ENCODE measurements at regions of chr12 and their contacts with region 1.

Region 1: DNA sequence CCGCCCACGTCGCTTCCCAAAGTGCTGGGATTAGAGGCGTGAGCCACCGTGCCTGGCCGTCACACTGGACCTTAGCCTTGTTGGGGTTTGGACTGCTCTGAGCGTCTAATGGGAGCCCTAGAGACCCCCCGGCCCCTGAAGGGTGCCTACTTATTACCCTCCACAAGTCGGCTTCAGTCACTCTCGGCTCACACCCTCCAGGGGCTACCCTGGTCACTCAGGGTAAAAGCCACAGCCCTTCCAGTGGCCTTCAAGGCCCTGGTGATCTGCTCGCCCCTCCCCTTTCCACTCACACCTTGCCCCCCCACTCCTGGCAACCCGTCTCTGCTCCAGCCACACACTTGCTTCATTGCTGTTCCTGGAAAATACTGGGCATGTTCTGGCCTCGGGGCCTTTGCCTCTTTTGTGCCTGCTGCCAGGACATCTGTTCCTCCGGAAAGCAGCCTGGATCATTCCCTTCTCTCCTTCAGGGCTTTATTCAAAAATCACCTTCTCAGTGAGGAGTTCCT is 3.6 kb upstream of the MORN3 start:
- DNase-seq: no peak
- CTCF ChIP-seq: no peak

Region 2: GRCh38 chr12:120909633-120910298 is 763.3 kb before region 1 on chr12:
- in situ Hi-C with region 1: no loop called
- DNase-seq: peak; percentile 50
- CTCF ChIP-seq: no peak

Region 3: DNA sequence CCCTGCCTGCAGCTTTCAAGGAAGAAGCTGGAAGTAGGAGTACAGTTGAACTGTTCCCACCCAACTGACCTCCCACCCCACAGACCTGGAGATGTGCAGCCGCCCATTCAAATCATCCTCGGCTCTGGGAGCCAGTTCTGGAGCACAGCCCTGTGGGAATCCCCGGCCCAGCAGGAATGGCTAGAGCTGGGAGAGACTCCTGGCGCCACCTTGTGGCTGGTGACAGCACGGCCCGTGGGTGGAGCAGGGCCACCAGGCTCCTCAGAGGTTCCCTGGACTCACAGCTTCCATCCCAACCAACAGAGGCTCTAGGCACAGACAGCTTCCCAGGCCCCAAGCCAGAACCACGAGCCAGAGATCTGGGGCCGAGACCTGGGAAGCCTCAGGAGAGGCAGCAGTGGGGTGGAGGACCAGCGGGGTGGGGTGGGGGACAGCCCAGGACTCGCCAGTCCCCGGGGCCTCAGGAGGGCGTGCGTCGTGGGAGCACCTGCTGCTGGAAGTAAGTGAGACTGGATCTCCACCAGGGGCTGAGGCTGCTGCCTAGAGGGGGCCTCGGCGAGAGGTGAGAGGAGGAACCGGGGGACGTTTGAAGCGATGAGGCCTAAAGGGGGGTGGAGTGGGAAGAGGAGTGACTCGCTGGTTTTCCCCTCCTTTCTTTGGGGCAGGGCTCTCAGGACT is 229.7 kb before region 1 on chr12:
- in situ Hi-C with region 1: no loop called
- DNase-seq: peak; percentile 93
- CTCF ChIP-seq: peak; percentile 84

Region 4: DNA sequence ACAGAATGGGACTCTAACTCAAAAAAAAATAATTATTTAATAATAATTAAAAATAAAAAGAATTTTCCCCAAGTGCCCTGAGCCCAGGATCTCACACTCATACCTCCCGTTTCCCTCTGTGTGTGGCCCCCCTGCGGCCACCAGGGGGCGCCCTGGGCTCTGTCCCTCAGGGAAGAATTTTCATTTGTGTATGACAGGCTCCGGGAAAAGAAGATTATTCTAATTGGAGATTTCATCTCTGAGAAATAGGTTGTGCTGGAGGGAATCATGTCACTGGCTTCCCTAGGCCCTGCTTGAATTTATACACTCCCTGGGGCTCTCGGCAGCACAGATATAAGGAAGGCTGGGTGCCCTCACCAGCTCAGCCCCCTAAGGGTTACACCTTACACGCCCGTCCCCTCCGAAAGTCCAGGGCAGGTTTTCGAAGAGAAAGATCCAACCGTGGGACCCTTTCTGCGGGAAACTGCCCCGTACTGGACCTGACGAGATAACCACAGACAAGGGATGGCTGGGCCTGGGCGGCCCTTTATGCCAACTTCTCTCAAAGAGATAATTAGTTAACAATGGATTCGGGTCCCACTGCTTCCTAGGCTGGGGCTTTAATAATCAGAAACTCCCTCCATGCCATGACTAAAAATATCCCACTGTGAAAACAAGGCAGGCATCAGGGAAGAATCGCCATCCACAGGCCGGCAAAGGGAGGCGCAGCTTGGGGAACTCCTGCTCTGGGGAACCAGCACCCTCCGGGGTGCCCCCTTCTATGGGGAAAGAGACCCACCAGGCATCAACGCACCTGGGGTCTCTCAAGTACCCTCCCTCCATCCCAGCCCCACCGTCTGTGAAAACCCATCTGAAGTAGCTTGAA is 172.9 kb before region 1 on chr12:
- in situ Hi-C with region 1: loop called (anchors 10 kb)
- DNase-seq: peak; percentile 86
- CTCF ChIP-seq: peak; percentile 93

Measured in GM13976 (cell line).